IMR-90 (cell line): ENCODE measurements at regions of chr13 and their contacts with region 1.

Region 1: GRCh38 chr13:76383676-76384461 is 502.3 kb downstream of the KCTD12 start:
- DNase-seq: peak; percentile 94
- ATAC-seq: peak; percentile 95
- H3K4me3 ChIP-seq: no peak overlapping the region
- H3K27ac ChIP-seq: peak overlapping the region; percentile 58; the same call in 1 of the 2 replicates
- H3K4me1 ChIP-seq: peaks cover 4% of the 10 kb centered on the region; the same call in 1 of the 2 replicates
- H3K27me3 ChIP-seq: peaks cover 20% of the 10 kb centered on the region
- CTCF ChIP-seq: no peak
- POLR2A ChIP-seq: no peak
- RAD21 ChIP-seq: no peak

Region 2: GRCh38 chr13:76307142-76307541 is 76.7 kb before region 1 on chr13:
- CTCF ChIA-PET with region 1: no interaction called
- POLR2A ChIA-PET with region 1: no interaction called
- dilution Hi-C with region 1: no loop called
- in situ Hi-C with region 1: no loop called
- intact Hi-C with region 1: loop called (anchors 5 kb)
- DNase-seq: peak; percentile 79
- ATAC-seq: peak; percentile 97
- H3K4me3 ChIP-seq: no peak overlapping the region
- H3K27ac ChIP-seq: peak overlapping the region; percentile 12; the same call in 1 of the 2 replicates
- H3K4me1 ChIP-seq: peaks cover 2% of the 10 kb centered on the region; the same call in 1 of the 2 replicates
- H3K27me3 ChIP-seq: no peaks in the 10 kb centered on the region
- CTCF ChIP-seq: 0 out of 2 replicates have a peak, but pooled peaks have one; percentile 10
- POLR2A ChIP-seq: no peak
- RAD21 ChIP-seq: peak; percentile 23; the same call in 1 of the 2 replicates

Region 3: GRCh38 chr13:76339649-76340048 is 44.2 kb before region 1 on chr13:
- CTCF ChIA-PET with region 1: no interaction called
- POLR2A ChIA-PET with region 1: no interaction called
- dilution Hi-C with region 1: no loop called
- in situ Hi-C with region 1: no loop called
- intact Hi-C with region 1: loop called (anchors 5 kb)
- DNase-seq: no peak
- ATAC-seq: no peak
- H3K4me3 ChIP-seq: no peak overlapping the region
- H3K27ac ChIP-seq: no peak overlapping the region
- H3K4me1 ChIP-seq: no peaks in the 10 kb centered on the region
- H3K27me3 ChIP-seq: no peaks in the 10 kb centered on the region
- CTCF ChIP-seq: no peak
- POLR2A ChIP-seq: no peak
- RAD21 ChIP-seq: no peak